ENCODE measurements at regions of chr7 and their contacts with region 1.

Region 1: DNA sequence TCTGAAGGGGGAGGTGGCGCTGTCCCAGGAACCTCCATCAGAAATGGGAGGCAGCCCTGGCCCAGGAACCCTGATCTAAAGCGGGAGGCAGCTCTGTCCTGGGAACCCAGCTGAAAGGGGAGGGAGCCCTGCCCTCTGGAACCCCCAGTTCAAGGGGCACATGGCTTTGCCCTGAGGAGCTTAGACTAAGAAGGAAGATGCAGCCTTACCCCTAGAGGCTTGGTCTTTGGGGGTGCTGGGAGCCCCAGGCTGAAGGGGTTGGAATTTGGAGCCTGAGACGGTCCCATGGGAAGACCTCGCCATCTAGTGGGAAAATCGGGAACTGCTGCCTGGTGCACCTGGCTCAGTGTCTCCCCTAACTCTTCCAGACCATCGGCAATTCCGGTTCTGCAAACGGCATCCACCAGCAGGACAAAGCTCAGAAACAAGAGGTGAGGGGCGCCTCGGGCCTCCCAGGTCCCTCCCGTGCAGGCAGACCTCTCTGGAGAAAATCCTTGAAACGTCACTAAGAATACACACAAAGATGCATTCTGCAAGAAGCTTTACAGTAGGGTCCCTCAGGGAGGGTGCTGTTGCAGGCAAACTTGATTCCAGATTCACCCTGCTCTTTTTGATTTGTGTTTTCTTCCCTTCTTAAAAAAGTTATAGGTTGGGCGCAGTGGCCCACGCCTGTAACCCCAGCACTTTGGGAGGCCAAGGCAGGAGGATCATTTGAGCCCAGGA is 52.4 kb upstream of the GTF2IRD1 start:
- DNase-seq: peak; percentile 79 to 90 (median 86)
- ATAC-seq: peak; percentile 79
- H3K4me3 ChIP-seq: no peak overlapping the region
- H3K27ac ChIP-seq: no peak overlapping the region
- H3K4me1 ChIP-seq: peaks cover 10 to 33% of the 10 kb centered on the region in 2 experiments
- H3K27me3 ChIP-seq: peaks cover 0 to 18% of the 10 kb centered on the region in 2 experiments; a peak in 2 of 5 replicates
- CTCF ChIP-seq: peak; percentile 95 to 99 (median 96)
- EP300 ChIP-seq: no peak
- POLR2A ChIP-seq: no peak
- RAD21 ChIP-seq: peak; percentile 90 to 92

Region 2: DNA sequence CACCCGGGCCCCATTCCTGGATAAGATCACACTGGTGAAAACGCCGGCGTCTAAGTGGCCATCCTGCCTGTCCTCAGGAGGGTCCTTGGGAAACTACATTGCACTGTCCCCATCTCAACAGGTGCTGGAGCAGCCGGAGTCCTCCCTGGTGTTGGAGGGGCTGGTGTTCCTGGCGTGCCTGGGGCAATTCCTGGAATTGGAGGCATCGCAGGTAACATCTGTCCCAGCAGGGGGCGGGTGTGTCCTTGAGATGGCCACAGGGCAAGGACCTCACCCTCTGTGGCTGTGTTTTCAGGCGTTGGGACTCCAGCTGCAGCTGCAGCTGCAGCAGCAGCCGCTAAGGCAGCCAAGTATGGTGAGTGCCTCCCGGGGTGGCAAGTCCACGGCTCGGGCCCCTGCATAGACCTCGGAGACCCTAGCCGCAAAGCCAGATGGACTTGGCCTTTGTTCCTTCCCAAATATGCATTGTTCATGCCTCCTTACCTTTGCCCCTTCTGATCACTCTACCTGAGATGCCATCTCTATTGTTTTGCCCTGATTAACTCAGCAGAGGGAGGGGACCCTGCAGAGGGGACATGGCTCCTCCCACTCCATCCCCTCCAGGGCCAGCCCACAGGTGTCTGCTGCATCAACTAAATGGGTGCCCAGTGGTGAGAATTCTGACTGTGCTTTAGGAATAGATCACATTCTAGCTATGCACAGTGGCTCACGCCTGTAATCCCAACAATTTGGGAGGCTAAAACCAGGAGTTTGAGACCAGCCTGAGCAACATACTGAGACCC is 349.5 kb before region 1 on chr7:
- CTCF ChIA-PET with region 1: interaction called, 26 read pairs
- POLR2A ChIA-PET with region 1: no interaction called
- in situ Hi-C with region 1: no loop called
- intact Hi-C with region 1: loop called (anchors 5 kb)
- DNase-seq: peak; percentile 75 to 82 (median 79)
- ATAC-seq: peak; percentile 92
- H3K4me3 ChIP-seq: no peak overlapping the region
- H3K27ac ChIP-seq: no peak overlapping the region
- H3K4me1 ChIP-seq: peaks cover 0 to 16% of the 10 kb centered on the region in 2 experiments; a peak in 2 of 5 replicates
- H3K27me3 ChIP-seq: peaks cover 8 to 33% of the 10 kb centered on the region in 2 experiments; a peak in 4 of 5 replicates
- CTCF ChIP-seq: peak; percentile 73 to 83 (median 83)
- EP300 ChIP-seq: no peak
- POLR2A ChIP-seq: no peak
- RAD21 ChIP-seq: peak; percentile 50 to 78

Region 3: DNA sequence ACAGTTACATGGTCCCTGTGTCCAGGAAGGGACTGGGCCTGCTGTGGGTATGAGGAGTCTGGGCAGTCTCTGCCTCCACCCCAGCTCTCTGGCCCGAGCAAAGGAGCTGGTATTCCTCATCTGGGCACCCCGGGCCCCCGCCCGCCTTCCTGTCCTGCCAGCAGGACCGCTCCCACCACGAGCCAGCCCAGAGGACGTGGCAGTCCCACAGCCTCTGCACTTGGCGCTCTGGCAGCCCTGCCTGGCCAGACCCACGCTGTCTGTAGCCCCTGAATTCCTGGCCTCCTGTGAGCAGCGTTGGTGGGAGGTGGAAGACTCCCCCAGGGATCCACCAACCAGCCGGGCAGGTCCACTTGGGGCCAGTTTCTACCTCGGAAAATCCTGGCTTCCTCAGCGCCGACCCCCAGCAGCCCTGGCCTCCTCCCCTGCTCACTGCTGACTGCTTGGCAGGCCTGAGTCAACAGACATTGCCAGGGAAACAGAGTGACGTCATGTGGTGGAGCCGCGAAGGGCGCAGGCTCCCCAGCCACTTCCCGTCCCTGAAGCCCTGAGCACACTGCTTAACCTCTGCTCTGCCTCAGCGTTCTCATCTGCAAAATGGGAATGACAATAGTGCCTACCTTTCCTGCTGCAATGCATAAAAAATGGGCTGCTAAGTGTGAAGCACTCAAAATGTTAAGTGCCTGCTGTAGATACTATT is 339.3 kb before region 1 on chr7:
- CTCF ChIA-PET with region 1: no interaction called
- POLR2A ChIA-PET with region 1: interaction called, 5 read pairs
- in situ Hi-C with region 1: loop called (anchors 5 kb)
- intact Hi-C with region 1: no loop called
- DNase-seq: peak; percentile 64 to 73 (median 71)
- ATAC-seq: peak; percentile 86
- H3K4me3 ChIP-seq: no peak overlapping the region
- H3K27ac ChIP-seq: no peak overlapping the region
- H3K4me1 ChIP-seq: peaks cover 0 to 19% of the 10 kb centered on the region in 2 experiments; a peak in 2 of 5 replicates
- H3K27me3 ChIP-seq: peaks cover 28 to 50% of the 10 kb centered on the region in 2 experiments
- CTCF ChIP-seq: no peak
- EP300 ChIP-seq: no peak
- POLR2A ChIP-seq: no peak
- RAD21 ChIP-seq: no peak

Region 4: DNA sequence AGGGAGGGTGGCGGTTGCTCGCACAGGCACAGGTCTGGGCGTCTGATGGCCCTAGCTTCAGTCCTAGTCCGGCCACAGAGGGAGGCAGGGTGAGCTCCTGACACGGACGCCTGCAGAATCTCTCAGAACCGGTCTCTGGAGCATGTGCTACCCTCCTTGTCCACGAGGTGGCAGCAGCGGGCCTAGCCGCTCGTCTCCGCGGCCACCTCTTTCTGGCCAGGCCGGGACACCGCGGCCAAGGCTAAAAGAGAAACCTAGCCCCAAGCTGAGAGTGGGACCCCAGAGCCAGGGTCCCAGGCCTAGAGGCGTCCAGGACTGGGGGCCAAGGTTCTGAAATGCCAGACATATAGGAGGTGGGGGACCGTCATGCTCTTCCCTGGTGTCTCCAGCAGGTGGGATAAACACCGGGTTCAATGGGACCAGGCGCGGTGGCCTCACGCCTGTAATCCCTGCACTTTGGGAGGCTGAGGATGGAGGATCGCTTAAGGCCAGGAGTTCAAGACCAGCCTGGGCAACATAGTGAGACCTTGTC is 194.6 kb before region 1 on chr7:
- CTCF ChIA-PET with region 1: interaction called, 28 read pairs
- POLR2A ChIA-PET with region 1: interaction called, 7 read pairs
- in situ Hi-C with region 1: loop called (anchors 5 kb)
- intact Hi-C with region 1: loop called (anchors 1 kb)
- DNase-seq: peak; percentile 84 to 90 (median 86)
- ATAC-seq: peak; percentile 86
- H3K4me3 ChIP-seq: no peak overlapping the region
- H3K27ac ChIP-seq: no peak overlapping the region
- H3K4me1 ChIP-seq: peaks cover 3 to 28% of the 10 kb centered on the region in 2 experiments; a peak in 4 of 5 replicates
- H3K27me3 ChIP-seq: no peaks in the 10 kb centered on the region; a peak in 1 of 5 replicates
- CTCF ChIP-seq: peak; percentile 95 to 99 (median 97)
- EP300 ChIP-seq: no peak
- POLR2A ChIP-seq: no peak
- RAD21 ChIP-seq: peak; percentile 96 to 98

Region 5: DNA sequence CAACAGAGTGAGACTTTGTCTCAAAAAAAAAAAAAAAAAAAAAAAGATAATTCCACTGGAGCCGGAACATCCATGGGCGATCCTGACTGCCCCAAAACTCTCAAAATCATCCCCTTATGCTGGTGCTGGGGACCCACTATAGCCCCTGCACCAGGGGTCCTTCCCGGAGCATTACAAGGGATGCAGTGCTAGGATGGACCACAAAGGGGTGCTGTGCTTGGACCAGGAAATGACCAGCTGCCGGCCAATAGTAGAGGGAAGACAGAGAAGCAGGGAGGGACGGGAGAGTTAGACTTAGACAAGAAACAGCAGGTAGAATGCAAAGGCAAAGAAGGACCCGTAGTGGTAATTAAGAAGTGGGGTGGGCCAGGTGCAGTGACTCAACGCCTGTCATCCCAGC is 631.8 kb after region 1 on chr7:
- CTCF ChIA-PET with region 1: no interaction called
- POLR2A ChIA-PET with region 1: no interaction called
- in situ Hi-C with region 1: loop called (anchors 25 kb)
- intact Hi-C with region 1: no loop called
- DNase-seq: peak; percentile 44 to 73 (median 68)
- ATAC-seq: peak; percentile 85
- H3K4me3 ChIP-seq: no peak overlapping the region
- H3K27ac ChIP-seq: no peak overlapping the region
- H3K4me1 ChIP-seq: 0 out of 5 replicates have a peak, but pooled peaks cover 0 to 3% of the 10 kb centered on the region in 2 experiments
- H3K27me3 ChIP-seq: no peaks in the 10 kb centered on the region
- CTCF ChIP-seq: peak; percentile 52 to 55 (median 52)
- EP300 ChIP-seq: no peak
- POLR2A ChIP-seq: no peak
- RAD21 ChIP-seq: no peak

Measured in K562 (cell line).